ENCODE measurements at regions of chr7 and their contacts with region 1.

Region 1: DNA sequence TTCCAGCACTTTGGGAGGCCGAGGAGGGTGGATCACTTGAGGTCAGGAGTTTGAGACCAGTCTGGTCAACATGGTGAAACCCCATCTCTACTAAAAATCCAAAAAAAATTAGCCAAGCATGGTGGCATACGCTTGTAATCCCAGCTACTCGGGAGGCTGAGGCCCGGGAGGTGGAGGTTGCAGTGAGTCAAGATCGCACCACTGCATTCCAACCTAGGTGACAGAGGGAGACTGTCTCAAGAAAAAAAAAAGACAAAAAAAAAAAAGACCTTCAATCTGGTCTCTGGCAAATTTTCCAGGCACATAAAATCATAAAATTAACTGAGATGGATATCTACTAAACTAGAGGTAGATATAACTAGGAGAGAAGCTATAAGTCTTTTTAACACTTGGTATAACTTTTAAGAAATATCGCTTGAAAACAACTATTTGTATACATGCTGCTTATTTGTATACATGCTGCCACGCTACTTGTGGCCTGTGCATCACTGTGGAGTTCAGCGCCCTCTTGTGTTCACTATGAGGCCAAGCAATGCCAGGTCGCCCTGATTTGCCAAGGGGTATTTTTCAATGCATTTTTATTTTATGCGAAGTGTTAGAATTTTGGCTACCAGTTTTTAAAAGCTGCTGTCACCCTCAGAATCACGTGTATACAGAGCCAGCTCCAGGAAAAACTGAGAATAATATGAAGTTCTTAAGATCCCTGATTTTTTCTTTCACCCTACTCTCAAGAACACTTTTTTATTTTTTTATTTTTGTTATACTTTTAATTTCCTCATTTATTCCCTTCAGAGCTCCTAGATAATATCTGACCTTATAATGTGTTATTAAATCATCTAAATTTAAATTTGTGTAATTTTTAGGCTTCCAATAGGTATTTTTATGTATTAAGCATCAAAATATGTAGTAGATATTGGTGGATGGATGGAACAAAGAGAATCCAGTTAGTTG is 26.7 kb downstream of the CYCS start:
- DNase-seq: peak; percentile 76
- H3K4me3 Mint-ChIP-seq: no peak overlapping the region
- H3K27ac Mint-ChIP-seq: no peak overlapping the region
- H3K4me1 Mint-ChIP-seq: peaks cover 7% of the 10 kb centered on the region
- H3K27me3 Mint-ChIP-seq: no peaks in the 10 kb centered on the region

Region 2: DNA sequence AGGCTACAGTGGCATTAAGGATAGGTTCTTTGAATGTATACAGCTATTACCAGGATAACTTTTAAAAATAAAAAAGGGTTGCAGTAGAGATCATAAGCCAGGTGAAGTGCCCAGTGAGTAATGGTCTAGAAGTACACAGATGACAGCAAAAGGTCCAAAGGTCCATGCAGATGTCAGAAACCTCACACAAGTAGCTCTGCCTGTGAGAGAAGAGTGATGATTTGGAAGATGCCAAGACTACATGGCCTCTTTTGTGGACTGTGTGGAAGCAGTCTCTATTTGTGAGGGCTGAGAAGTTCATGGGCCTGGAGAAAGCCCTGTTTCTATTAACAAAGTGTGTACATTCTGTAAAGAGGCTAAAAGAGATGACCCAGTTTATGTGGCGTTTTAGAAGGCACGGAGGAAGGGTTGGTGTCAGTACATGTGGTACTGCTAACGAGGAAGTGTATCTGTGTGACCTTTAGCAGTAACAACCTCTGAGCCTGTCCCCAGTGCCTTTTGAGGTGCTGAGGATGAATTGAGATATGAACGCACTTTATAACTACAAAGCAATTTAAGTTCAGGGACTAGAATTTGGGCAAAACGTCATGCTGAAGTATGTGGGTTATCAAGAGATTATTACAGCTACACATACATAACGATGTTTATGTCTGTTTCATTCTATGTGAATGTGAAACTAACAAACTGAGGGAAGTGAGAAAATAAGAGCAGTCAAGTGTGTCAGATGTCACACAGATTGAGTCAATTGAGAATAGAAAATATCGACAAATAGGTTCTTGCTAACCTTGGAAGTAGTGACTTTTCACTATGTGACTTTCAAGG is 19.1 kb after region 1 on chr7:
- CTCF ChIA-PET with region 1: interaction called, 11 read pairs
- intact Hi-C with region 1: no loop called
- DNase-seq: no peak
- H3K4me3 Mint-ChIP-seq: no peak overlapping the region
- H3K27ac Mint-ChIP-seq: peak overlapping the region; percentile 5
- H3K4me1 Mint-ChIP-seq: peaks cover 50% of the 10 kb centered on the region
- H3K27me3 Mint-ChIP-seq: no peaks in the 10 kb centered on the region